Activated CD4-positive, alpha-beta memory T cell treated with anti-CD3 and anti-CD28 coated beads, Interleukin-2, amount 10 ng/mL, durations not matched to agents 7 days and 5 days (primary cell): ENCODE measurements at regions of chr15 and their contacts with region 1.

Region 1: GRCh38 chr15:69462493-69463181 is 10.0 kb downstream of the RPLP1 start:
- DNase-seq: peak; percentile 91
- H3K4me3 Mint-ChIP-seq: peak overlapping the region; percentile 84
- H3K27ac Mint-ChIP-seq: peak overlapping the region; percentile 72
- H3K4me1 Mint-ChIP-seq: peaks cover 28% of the 10 kb centered on the region
- H3K27me3 Mint-ChIP-seq: peaks cover 15% of the 10 kb centered on the region

Region 2: DNA sequence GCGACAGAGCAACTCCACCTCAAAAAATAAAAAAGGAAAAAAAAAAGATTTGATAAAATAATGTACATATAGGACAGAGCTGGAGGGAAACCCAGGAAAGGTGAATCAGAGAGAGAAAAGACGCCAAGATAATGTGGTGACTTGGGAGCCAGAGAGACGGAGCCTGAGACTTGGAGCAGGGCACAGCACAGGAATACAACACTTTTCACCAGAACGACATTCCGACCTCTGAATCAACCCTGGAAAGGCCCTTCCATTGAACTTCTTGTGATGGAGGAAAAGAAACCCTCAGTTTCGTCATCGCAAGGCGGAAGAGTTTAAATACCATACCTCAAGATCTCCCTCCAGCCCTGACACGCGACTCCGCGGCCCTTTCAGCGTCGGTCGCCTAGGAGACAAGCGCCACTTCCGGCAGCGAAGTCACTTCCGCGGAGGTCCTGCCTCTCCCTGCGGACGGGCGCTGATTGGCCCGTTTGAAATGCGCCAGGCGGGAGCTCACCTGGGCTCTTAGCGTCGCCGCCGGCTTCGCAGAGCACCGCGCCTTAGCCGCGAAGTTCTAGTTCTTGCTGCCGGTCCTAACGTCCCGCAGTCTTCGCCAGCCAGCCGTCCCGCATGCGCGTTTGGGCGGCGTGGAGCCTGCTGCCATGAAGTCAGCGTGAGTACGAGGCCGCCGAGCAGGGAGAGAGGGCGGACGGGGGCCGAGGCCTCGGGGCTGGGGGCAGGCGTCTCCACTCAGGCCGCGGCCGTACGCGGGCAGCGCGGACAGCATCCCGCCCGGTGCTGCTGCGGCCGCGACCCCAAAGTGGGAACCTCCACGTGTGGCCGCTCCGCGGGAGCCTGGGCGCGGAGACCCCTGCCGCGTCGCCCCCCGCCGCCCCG is 48.6 kb before region 1 on chr15 and contains the start of gene KIF23:
- CTCF ChIA-PET with region 1: interaction called, 17 read pairs
- POLR2A ChIA-PET with region 1: interaction called, 6 read pairs
- DNase-seq: peak; percentile 95
- H3K4me3 Mint-ChIP-seq: peak within 1 kb of the TSS; percentile 86
- H3K27ac Mint-ChIP-seq: peak within 1 kb of the TSS; percentile 65
- H3K4me1 Mint-ChIP-seq: peaks cover 36% of the 10 kb centered on the region
- H3K27me3 Mint-ChIP-seq: peaks cover 4% of the 10 kb centered on the region
- total RNA-seq, gene KIF23: 55.7 to 60.8 TPM

Region 3: DNA sequence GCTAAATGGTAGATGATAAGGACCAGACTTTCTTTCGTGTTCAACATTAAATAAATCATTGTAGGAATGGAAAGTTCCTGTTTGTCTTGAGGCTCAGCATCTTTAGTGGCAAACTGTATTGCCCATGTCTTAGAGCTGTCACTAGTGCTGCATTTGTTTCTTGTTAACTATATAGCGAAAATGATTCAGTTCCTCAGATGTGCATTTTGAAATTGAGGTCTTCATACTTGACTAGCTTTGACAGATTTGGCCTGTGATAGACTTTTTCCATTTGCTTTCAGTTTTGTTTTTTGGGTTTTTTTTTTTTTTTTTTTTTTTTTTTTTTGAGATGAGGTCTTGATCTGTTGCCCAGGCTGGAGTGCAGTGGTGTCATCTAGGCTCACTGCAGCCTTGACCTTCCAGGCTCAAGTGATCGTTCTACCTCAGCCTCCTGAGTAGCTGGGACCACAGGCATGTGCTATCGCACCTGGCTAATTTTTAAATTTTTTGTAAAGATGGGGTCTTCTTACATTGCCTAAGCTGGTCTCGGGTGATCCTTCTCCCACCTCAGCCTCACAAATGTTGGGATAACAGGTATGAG is 19.5 kb before region 1 on chr15:
- CTCF ChIA-PET with region 1: interaction called, 16 read pairs
- POLR2A ChIA-PET with region 1: interaction called, 5 read pairs
- DNase-seq: no peak
- H3K4me3 Mint-ChIP-seq: peak overlapping the region; percentile 35
- H3K27ac Mint-ChIP-seq: peak overlapping the region; percentile 66
- H3K4me1 Mint-ChIP-seq: peaks cover 16% of the 10 kb centered on the region
- H3K27me3 Mint-ChIP-seq: no peaks in the 10 kb centered on the region

Region 4: DNA sequence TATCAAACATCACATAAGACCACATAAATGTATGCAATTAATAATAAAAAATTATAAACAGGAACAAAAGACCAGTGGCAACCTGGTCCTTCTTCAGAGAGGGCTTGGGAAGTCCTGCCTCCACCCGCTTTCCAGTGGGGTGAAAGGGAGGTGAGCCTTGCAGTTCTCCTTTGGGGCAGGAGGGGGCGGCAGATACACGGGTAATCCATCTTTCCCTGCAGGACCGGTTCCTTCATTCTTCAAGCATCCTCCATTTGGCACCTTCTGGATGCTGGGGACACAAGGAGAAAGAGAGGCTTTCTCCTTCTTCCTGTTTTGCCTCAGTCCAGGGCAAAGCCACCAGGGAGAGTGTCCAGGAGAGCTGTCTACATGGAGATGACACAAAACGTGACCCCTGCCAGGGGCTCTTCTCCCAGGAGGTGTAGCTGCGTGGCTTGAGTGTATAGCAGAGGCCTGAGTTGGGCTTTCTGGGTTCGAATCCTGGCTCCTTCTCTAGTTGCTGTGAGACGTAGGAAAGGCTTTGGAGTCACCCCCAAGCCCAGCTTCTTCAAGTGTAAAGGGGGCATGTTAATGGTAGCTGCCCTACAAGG is 13.2 kb after region 1 on chr15:
- CTCF ChIA-PET with region 1: interaction called, 10 read pairs
- POLR2A ChIA-PET with region 1: no interaction called
- DNase-seq: peak; percentile 71
- H3K4me3 Mint-ChIP-seq: no peak overlapping the region
- H3K27ac Mint-ChIP-seq: no peak overlapping the region
- H3K4me1 Mint-ChIP-seq: no peaks in the 10 kb centered on the region
- H3K27me3 Mint-ChIP-seq: peaks cover 26% of the 10 kb centered on the region

Region 5: DNA sequence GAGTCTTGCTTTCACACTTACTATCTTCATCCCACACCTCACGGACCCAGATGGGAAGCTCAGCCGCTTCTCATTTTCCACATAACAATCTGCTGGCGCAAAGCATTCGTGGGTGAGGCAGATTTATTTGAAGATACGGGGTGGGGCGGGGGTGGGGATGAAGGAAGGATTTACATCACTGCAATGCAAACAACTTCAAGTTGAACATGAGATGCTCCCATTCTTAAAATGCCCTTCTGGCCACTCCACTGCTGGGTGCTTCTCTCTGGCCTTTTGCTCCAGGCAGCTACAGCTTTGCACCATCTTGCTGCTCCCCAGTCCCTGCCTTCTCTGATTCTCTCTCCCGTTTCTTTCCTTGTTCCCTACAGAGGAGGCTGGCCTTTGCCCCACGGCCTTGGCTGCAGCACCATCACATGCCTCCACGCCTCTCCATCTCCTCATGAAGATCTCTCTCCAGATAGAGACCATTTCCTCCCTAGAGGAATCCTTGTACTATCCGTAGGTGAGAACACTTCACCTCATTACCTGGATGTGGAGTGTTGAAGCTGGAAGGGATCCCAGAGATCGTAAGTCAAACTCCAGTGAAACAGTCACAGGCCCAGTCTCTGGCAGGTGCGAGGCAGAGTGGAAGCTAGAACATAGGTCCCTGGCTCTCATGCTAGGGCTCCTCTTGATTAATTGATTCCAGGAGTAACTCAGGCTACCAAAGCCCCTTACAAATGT is 165.9 kb after region 1 on chr15:
- CTCF ChIA-PET with region 1: no interaction called
- POLR2A ChIA-PET with region 1: no interaction called
- DNase-seq: no peak
- H3K4me3 Mint-ChIP-seq: no peak overlapping the region
- H3K27ac Mint-ChIP-seq: no peak overlapping the region
- H3K4me1 Mint-ChIP-seq: peaks cover 2% of the 10 kb centered on the region
- H3K27me3 Mint-ChIP-seq: peaks cover 31% of the 10 kb centered on the region

Region 6: GRCh38 chr15:69719527-69720240 is 257.0 kb after region 1 on chr15:
- CTCF ChIA-PET with region 1: interaction called, 10 read pairs
- POLR2A ChIA-PET with region 1: interaction called, 4 read pairs
- DNase-seq: peak; percentile 75
- H3K4me3 Mint-ChIP-seq: no peak overlapping the region
- H3K27ac Mint-ChIP-seq: peak overlapping the region; percentile 23
- H3K4me1 Mint-ChIP-seq: peaks cover 70% of the 10 kb centered on the region
- H3K27me3 Mint-ChIP-seq: peaks cover 56% of the 10 kb centered on the region